ENCODE measurements at regions of chrX and their contacts with region 1.

Region 1: DNA sequence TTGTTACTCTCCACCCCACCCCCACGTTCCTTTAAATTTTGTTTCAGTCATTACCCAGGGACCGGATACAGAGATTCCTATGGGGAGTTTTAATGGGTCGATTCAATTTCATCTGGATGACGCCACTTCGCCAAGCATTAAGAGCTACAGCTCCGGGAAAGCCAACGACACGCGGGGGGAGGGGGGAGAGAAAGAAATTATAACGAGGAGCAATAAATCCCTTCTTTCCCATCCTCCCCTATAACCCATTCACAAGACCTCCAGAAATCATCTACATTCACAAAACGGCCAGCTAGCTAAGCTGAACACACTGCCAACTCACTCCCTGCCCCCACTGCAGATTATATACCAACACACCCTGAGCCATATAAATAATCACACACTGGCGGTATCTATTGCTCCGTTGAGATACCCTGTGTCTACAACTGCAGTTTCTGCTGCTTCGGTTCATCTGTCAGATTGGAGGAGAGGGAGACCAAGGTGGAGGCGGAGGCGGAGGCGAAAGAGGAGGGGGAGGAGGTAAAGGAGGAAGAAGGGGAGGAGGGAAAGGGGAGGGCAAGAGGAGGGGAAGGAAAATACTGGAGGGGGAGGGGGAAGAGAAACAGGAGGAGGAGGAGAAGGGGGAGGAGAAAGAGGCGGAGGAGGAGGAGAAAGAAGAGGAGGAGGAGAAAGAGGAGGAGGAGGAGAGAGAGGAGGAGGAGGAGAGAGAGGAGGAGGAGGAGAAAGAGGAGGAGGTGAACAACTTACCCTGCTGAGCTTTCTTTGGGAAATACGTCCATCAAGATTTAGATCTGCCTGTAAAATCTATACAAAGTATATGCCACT is 113.9 kb upstream of the VAMP7 start:
- DNase-seq: peak; percentile 62 to 71
- ATAC-seq: peak; percentile 87
- H3K4me3 ChIP-seq: peak overlapping the region; percentile 0 to 60
- H3K27ac ChIP-seq: no peak overlapping the region
- H3K4me1 ChIP-seq: peaks cover 0 to 2% of the 10 kb centered on the region in 2 donors
- H3K27me3 ChIP-seq: no peaks in the 10 kb centered on the region

Region 2: GRCh38 chrX:155612312-155613224 is 154.7 kb before region 1 on chrX and contains the start of gene TMLHE:
- intact Hi-C with region 1: loop called in 1 of 2 experiments (anchors 10 kb)
- DNase-seq: peak; percentile 79 to 87
- ATAC-seq: peak; percentile 92
- H3K4me3 ChIP-seq: peak within 1 kb of the TSS; percentile 63 to 72
- H3K27ac ChIP-seq: peak within 1 kb of the TSS in 1 of 2 donors; percentile 73
- H3K4me1 ChIP-seq: no peaks in the 10 kb centered on the region
- H3K27me3 ChIP-seq: no peaks in the 10 kb centered on the region
- total RNA-seq, gene TMLHE: 18.4 to 22.5 TPM